HCT116 (cell line): ENCODE measurements at regions of chr11 and their contacts with region 1.

Region 1: GRCh38 chr11:57667736-57668435 is at the start of gene ZDHHC5:
- DNase-seq: peak; percentile 99
- ATAC-seq: peak; percentile 90
- H3K4me3 ChIP-seq: peak within 1 kb of the TSS; percentile 85 to 97
- H3K27ac ChIP-seq: peak within 1 kb of the TSS; percentile 93
- H3K4me1 ChIP-seq: peaks cover 9 to 19% of the 10 kb centered on the region in 2 experiments
- H3K27me3 ChIP-seq: no peaks in the 10 kb centered on the region
- CTCF ChIP-seq: peak in 2 of 3 experiments; percentile 39 to 41; a peak in 3 of 6 replicates
- POLR2A ChIP-seq: peak; percentile 58
- RAD21 ChIP-seq: no peak
- total RNA-seq, gene ZDHHC5: 64.1 TPM

Region 2: GRCh38 chr11:57657194-57658022 is 10.5 kb before region 1 on chr11 and contains the start of gene CLP1:
- CTCF ChIA-PET with region 1: no interaction called
- POLR2A ChIA-PET with region 1: no interaction called
- RAD21 ChIA-PET with region 1: no interaction called
- intact Hi-C with region 1: loop called (anchors 1 kb)
- DNase-seq: peak; percentile 98
- ATAC-seq: peak; percentile 98
- H3K4me3 ChIP-seq: peak within 1 kb of the TSS; percentile 83 to 97
- H3K27ac ChIP-seq: peak within 1 kb of the TSS; percentile 35; the same call in 1 of the 2 replicates
- H3K4me1 ChIP-seq: peaks cover 7 to 11% of the 10 kb centered on the region in 2 experiments; a peak in 3 of 4 replicates
- H3K27me3 ChIP-seq: no peaks in the 10 kb centered on the region
- CTCF ChIP-seq: no peak
- POLR2A ChIP-seq: no peak
- RAD21 ChIP-seq: no peak
- total RNA-seq, gene CLP1: 17.7 TPM

Region 3: DNA sequence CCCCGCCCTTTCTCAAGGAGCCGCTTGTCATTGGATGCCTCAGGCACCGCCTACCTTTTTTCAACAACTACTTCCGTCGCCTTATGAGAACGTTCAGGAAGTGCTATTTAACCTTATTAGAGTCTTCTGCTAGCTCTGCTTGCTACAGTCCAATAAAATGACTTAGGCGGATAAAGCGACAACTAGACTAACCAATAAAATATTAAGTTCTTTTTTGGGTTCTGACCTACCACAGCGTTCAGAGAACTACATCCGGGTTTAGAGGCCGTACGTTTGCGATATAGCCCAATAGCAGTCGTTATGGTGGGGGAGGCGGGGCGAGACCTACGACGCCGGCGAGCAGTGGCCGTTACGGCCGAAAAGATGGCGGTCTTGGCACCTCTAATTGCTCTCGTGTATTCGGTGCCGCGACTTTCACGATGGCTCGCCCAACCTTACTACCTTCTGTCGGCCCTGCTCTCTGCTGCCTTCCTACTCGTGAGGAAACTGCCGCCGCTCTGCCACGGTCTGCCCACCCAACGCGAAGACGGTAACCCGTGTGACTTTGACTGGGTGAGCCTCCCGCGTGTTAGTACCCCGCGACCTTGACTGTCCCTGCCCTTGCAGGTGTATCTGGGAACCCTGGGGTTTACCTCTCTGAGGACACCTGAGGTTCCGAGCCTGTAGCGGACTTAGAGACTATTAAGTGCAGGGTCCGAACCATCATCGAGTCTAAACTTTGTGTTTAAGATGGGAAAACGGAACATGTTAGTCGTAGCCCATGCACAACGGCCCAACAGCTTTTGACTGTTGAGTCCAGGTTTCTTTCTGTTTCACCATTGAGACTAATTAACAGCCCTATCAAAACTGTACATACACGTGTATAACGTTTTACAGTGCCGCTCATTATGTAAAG is 44.6 kb after region 1 on chr11 and contains the start of gene TMX2:
- CTCF ChIA-PET with region 1: no interaction called
- POLR2A ChIA-PET with region 1: no interaction called
- RAD21 ChIA-PET with region 1: no interaction called
- intact Hi-C with region 1: loop called (anchors 2 kb)
- DNase-seq: peak; percentile 99
- ATAC-seq: peak; percentile 85
- H3K4me3 ChIP-seq: peak within 1 kb of the TSS; percentile 91 to 98
- H3K27ac ChIP-seq: peak within 1 kb of the TSS; percentile 86
- H3K4me1 ChIP-seq: peaks cover 18 to 22% of the 10 kb centered on the region in 2 experiments
- H3K27me3 ChIP-seq: no peaks in the 10 kb centered on the region
- CTCF ChIP-seq: no peak
- POLR2A ChIP-seq: peak; percentile 2
- RAD21 ChIP-seq: no peak
- total RNA-seq, gene TMX2: 93.9 TPM

Region 4: GRCh38 chr11:58286249-58286648 is 618.4 kb after region 1 on chr11:
- CTCF ChIA-PET with region 1: interaction called, 6 read pairs
- POLR2A ChIA-PET with region 1: no interaction called
- RAD21 ChIA-PET with region 1: no interaction called
- intact Hi-C with region 1: loop called (anchors 5 kb)
- DNase-seq: peak; percentile 23
- ATAC-seq: peak; percentile 94
- H3K4me3 ChIP-seq: no peak overlapping the region
- H3K27ac ChIP-seq: no peak overlapping the region
- H3K4me1 ChIP-seq: no peaks in the 10 kb centered on the region
- H3K27me3 ChIP-seq: no peaks in the 10 kb centered on the region
- CTCF ChIP-seq: peak; percentile 24 to 79 (median 67); a peak in 5 of 6 replicates
- POLR2A ChIP-seq: no peak
- RAD21 ChIP-seq: peak; percentile 61

Region 5: GRCh38 chr11:59550368-59550841 is 1882.5 kb after region 1 on chr11:
- CTCF ChIA-PET with region 1: no interaction called
- POLR2A ChIA-PET with region 1: no interaction called
- RAD21 ChIA-PET with region 1: no interaction called
- intact Hi-C with region 1: loop called (anchors 10 kb)
- DNase-seq: peak; percentile 96
- ATAC-seq: peak; percentile 88
- H3K4me3 ChIP-seq: peak overlapping the region; percentile 8 to 40; a peak in 3 of 4 replicates
- H3K27ac ChIP-seq: peak overlapping the region; percentile 74
- H3K4me1 ChIP-seq: peaks cover 44 to 65% of the 10 kb centered on the region in 2 experiments
- H3K27me3 ChIP-seq: no peaks in the 10 kb centered on the region
- CTCF ChIP-seq: peak in 2 of 3 experiments; percentile 22 to 38; a peak in 2 of 6 replicates
- POLR2A ChIP-seq: no peak
- RAD21 ChIP-seq: no peak; the same call in 1 of the 2 replicates